Adrenal gland (tissue), 19 donors: ENCODE measurements at regions of chr3 and their contacts with region 1.

Region 1: DNA sequence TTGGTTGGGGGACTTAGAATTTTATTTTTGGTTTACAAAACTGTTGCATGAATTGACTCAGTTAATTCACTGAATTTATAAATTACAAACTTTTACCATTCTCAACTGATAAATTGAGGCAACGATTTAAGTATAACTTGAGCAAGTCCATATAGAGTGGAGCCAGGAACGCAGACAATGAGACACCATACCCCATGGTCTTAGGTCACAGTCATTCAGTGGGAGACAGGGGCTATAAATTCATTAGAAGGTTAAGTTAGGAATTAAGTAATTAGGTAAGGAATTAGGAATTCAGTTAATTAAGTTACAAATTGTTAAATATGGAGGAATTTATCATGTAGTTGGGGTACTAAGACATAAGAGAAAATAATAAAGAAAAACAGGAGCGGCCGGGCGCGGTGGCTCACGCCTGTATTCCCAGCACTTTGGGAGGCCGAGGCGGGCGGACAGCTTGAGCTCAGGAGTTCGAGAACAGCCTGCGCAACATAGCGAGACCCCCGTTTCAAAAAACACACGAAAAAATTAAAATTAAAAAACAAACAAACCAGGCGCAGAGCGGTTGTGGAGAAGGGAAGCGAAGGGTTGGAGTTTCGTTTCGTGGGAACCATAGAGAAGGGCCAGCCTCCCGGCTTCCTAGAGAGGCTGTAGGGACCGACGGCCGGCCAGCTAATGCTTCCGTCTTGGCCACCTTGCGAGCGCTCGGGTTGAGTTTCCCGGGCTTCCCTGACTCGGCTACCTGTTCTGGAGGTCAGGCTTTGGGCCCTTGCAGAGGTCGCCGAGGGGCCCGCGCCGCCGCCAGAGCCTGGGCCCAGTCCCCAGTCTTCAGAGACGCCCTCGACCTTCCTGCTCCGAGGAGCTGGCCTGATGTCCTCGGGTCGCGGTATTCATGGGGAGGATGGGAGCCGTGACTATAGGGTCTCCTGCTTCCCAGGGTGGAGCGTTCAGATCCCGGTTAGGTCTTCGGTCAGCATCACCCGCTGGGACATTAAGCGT is at the start of gene ZNF619:
- DNase-seq: peak; percentile 62 to 83 (median 74)
- H3K4me3 ChIP-seq: peak within 1 kb of the TSS; percentile 50 to 69 (median 69)
- H3K27ac ChIP-seq: peak within 1 kb of the TSS in 3 of 5 donors; percentile 35 to 56 (median 45)
- H3K4me1 ChIP-seq: peaks cover 4 to 6% of the 10 kb centered on the region in 2 donors
- H3K27me3 ChIP-seq: no peaks in the 10 kb centered on the region
- CTCF ChIP-seq: no peak
- POLR2A ChIP-seq: peak in 1 of 2 donors; percentile 22
- total RNA-seq, gene ZNF619: 0.79 to 11.0 (median 6.0) TPM

Region 2: DNA sequence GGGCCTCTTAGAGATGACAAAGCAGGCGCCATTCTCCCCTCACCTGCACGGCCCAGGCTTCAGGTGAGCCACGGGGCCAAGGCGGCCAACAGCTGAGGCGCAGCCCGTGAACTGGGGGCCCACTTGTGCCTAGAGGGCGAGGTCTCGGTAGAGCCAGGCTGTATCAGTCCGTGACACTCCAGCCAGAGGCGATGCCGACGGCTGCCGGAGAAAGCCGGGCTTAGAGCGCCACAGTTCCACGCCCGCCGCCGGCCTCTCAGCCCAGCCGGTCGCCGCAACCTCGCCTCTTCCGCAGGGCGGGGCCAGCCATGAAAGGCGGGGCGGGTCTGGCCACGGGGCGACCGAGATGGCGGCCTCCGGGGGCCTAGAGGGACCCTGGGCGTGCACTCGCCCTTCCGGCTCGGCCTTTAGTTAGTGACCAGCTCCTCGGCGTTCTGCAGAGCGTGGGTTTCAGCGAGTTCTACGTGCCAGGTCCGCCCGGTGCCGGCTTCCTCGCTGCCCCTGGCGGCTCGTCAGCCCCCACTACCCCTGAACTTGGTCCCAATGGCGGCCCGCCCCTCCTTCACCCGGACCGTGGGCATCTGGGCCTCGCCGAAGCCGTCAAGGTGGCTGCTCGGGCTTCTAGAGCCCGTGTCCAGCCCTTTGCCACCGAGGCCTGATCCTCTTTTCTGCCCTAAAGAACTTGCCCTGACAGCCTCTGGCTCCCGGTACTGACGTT is 48.0 kb after region 1 on chr3 and contains the start of gene ZNF621:
- intact Hi-C with region 1: loop called in 1 of 2 experiments (anchors 2 kb)
- DNase-seq: peak; percentile 86 to 93 (median 89)
- H3K4me3 ChIP-seq: peak within 1 kb of the TSS; percentile 82 to 100 (median 90)
- H3K27ac ChIP-seq: peak within 1 kb of the TSS; percentile 31 to 91 (median 83)
- H3K4me1 ChIP-seq: peaks cover 5 to 12% of the 10 kb centered on the region in 2 donors
- H3K27me3 ChIP-seq: no peaks in the 10 kb centered on the region
- CTCF ChIP-seq: no peak
- POLR2A ChIP-seq: peak; percentile 73 to 81
- total RNA-seq, gene ZNF621: 9.1 to 22.1 (median 17.3) TPM

Region 3: DNA sequence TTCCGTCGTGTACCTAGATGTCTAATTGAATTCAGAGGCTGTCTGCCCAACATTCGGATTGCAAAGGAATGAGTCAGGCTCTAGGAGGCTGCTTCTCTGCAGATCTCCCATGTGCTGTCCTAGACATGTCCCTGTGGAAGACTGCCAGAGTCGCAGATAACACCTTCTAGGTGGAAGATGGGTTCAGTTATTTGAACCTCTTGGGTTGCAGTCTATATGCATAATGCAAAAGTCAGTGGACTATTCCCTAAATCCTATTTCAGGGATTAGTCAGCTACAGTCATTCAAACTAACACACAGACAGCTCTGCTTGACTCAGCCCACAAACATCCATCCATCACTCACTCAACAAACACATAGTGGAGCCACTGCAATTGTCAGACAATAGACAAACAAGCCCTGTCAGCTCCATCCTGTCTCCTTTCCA is 422.5 kb after region 1 on chr3:
- intact Hi-C with region 1: no loop called
- DNase-seq: peak in 2 of 7 donors; percentile 14 to 19
- H3K4me3 ChIP-seq: no peak overlapping the region
- H3K27ac ChIP-seq: no peak overlapping the region
- H3K4me1 ChIP-seq: no peaks in the 10 kb centered on the region
- H3K27me3 ChIP-seq: no peaks in the 10 kb centered on the region
- CTCF ChIP-seq: no peak
- POLR2A ChIP-seq: no peak